Right ventricle myocardium superior (tissue), 1 donor: ENCODE measurements at regions of chr12 and their contacts with region 1.

Region 1: DNA sequence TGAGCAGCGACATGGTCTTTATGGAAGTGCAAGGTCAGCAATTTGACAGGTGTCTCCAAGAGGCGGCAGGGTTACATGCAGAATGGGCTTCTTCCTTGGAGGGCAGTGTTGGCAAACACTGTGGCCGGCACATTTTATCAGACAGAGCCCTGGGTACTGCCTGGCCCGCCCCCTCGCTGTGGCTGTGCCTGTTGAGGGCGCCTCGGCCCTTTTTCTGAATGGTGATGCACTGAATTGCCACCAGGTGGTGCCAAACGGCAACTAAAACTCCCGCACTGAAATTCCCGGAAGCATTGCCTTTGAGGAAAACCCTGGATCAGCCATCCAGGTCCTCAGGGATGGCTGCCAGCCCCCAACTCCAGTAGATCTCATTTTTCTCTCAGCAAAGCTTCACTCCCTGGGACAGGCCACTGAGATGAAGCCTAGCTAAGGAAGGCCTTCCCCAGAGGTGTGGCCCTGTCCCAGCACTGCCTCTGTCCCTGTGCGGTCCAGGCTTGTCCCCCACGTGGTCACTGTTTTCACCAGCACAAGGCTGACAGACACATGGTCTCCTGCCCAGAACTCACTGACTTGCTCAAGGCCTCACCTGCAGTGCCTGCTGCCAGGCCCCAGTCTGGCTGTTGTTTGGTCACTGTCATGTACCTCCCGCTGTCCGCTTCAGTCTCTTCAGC is 73.6 kb downstream of the TESC start:
- DNase-seq: peak; percentile 75
- ATAC-seq: peak; percentile 85

Region 2: GRCh38 chr12:116898669-116899068 is 126.9 kb before region 1 on chr12:
- intact Hi-C with region 1: no loop called
- DNase-seq: no peak
- ATAC-seq: no peak

Region 3: DNA sequence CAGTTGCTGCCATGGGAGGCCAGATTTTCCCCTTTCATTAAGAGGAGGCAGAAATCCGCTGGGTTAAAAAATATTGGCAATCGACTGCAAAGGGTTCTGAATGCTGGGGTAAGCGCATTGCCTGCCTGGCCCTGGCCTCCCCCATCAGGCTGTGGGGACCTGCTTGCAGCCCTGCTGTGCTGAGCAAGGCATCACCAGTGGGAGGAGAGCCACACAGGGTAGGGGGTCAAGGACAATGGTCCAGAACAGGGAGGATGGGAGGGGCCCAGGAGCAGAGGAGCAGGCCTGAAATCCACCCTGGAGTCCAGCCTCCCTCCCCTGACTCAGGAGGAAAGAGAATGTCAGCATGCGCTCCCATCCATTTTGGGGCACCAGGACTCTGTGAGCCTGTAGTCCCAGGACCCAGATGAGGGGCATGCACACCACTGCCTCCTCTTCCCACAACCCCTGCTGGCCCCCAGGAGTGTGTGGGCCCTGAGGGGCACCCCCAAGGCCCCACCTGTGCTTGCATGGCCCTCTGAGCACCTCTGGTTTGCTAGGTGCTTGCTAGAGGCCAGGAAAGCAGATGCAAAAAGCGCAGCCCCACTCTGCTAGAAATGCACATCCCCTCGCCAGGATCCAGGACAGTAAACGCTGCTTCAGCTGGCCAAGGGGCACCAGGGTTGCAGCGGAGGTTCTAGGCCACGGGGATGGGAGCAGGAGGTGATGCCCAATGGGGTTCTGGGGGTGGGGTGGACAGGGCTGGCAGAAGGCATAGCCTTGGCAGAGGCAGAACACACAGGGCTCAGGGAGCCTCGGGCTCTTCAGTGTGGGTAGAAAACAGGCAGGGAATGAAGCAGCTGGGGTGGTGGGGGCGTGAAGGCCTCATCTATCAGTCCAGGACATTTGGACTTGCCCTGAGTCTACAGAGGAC is 59.0 kb after region 1 on chr12:
- intact Hi-C with region 1: no loop called
- DNase-seq: no peak
- ATAC-seq: peak; percentile 14

Region 4: GRCh38 chr12:117119592-117120198 is 94.1 kb after region 1 on chr12:
- intact Hi-C with region 1: loop called (anchors 2 kb)
- DNase-seq: peak; percentile 65
- ATAC-seq: peak; percentile 63

Region 5: GRCh38 chr12:117155278-117156060 is 129.9 kb after region 1 on chr12:
- intact Hi-C with region 1: loop called (anchors 10 kb)
- DNase-seq: peak; percentile 66
- ATAC-seq: peak; percentile 63